Activated naive CD4-positive, alpha-beta T cell treated with anti-CD3 and anti-CD28 coated beads for 36 hours (primary cell): ENCODE measurements at regions of chr5 and their contacts with region 1.

Region 1: DNA sequence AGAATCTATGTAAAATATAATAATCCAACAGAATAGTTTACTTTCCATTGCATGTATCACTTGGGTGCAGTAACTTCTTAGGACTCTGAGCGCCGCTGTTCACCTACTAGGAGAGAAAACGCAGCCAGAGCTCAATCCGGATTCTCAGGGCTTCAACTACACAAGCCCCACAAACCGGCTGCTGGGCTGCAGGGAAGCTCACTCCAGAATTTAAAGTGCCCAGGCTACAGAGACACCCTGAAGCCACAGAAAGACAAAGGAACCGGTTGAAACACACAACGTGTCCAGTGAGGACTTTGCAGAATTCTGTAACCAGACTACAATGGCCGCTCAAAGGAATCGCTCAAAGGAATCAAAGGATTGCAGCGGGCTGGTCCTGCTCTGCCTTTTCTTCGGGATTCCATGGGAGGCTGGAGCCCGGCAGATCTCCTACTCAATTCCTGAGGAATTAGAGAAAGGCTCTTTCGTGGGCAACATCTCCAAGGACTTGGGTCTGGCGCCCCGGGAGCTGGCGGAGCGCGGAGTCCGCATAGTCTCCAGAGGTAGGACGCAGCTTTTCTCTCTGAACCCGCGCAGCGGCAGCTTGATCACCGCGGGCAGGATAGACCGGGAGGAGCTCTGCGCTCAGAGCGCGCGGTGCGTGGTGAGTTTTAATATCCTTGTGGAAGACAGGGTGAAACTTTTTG is at the start of gene PCDHGA10:
- DNase-seq: peak; percentile 73
- H3K4me3 Mint-ChIP-seq: peak within 1 kb of the TSS; percentile 78
- H3K27ac Mint-ChIP-seq: no peak within 1 kb of the TSS
- H3K4me1 Mint-ChIP-seq: peaks cover 16% of the 10 kb centered on the region
- H3K27me3 Mint-ChIP-seq: peaks cover 69% of the 10 kb centered on the region
- total RNA-seq, gene PCDHGA10: 0.05 TPM in 1 of 2 experiments, not detected in the other

Region 2: GRCh38 chr5:141234109-141234667 is 178.8 kb before region 1 on chr5:
- CTCF ChIA-PET with region 1: no interaction called
- intact Hi-C with region 1: no loop called
- DNase-seq: no peak
- H3K4me3 Mint-ChIP-seq: no peak overlapping the region
- H3K27ac Mint-ChIP-seq: no peak overlapping the region
- H3K4me1 Mint-ChIP-seq: no peaks in the 10 kb centered on the region
- H3K27me3 Mint-ChIP-seq: peaks cover 48% of the 10 kb centered on the region

Region 3: GRCh38 chr5:141430332-141431113 is 17.5 kb after region 1 on chr5 and contains the start of gene PCDHGA12:
- CTCF ChIA-PET with region 1: interaction called, 8 read pairs
- intact Hi-C with region 1: loop called (anchors 2 kb)
- DNase-seq: peak; percentile 65
- H3K4me3 Mint-ChIP-seq: peak within 1 kb of the TSS; percentile 53
- H3K27ac Mint-ChIP-seq: no peak within 1 kb of the TSS
- H3K4me1 Mint-ChIP-seq: peaks cover 15% of the 10 kb centered on the region
- H3K27me3 Mint-ChIP-seq: peaks cover 54% of the 10 kb centered on the region
- total RNA-seq, gene PCDHGA12: not detected